ENCODE measurements at regions of chr13 and their contacts with region 1.

Region 1: DNA sequence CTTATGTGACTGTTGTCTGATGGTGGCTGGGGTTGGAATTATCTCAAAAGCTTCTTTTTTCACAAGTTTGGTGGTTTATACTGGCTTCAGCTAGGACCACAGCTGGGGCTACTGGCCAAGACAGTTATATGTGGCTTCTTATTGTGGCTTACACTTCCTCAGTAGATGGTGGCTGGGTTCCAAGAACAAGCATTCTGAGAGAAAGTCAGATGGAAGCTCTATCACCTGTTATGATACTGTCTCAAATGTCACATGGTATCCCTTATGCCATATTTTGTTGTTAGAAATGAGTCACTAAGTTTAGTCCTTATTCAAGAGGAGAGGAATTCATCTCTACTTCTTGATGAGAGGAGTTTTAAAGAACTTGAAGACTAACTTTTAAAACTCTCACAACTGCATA is 41.6 kb downstream of the NDFIP2 start:
- DNase-seq: peak; percentile 54
- H3K4me3 Mint-ChIP-seq: peak overlapping the region; percentile 43
- H3K27ac Mint-ChIP-seq: peak overlapping the region; percentile 86
- H3K4me1 Mint-ChIP-seq: peaks cover 43% of the 10 kb centered on the region
- H3K27me3 Mint-ChIP-seq: no peaks in the 10 kb centered on the region

Region 2: GRCh38 chr13:77907666-77908341 is 1614.8 kb before region 1 on chr13:
- intact Hi-C with region 1: no loop called
- DNase-seq: no peak
- H3K4me3 Mint-ChIP-seq: no peak overlapping the region
- H3K27ac Mint-ChIP-seq: no peak overlapping the region
- H3K4me1 Mint-ChIP-seq: no peaks in the 10 kb centered on the region
- H3K27me3 Mint-ChIP-seq: peaks cover 2% of the 10 kb centered on the region

Region 3: GRCh38 chr13:78658635-78659449 is 863.7 kb before region 1 on chr13 and contains the start of gene OBI1:
- intact Hi-C with region 1: loop called (anchors 10 kb)
- DNase-seq: peak; percentile 84
- H3K4me3 Mint-ChIP-seq: peak within 1 kb of the TSS; percentile 96
- H3K27ac Mint-ChIP-seq: peak within 1 kb of the TSS; percentile 97
- H3K4me1 Mint-ChIP-seq: peaks cover 36% of the 10 kb centered on the region
- H3K27me3 Mint-ChIP-seq: no peaks in the 10 kb centered on the region
- total RNA-seq, gene OBI1: 20.0 and 21.1 TPM in 2 replicates

Region 4: DNA sequence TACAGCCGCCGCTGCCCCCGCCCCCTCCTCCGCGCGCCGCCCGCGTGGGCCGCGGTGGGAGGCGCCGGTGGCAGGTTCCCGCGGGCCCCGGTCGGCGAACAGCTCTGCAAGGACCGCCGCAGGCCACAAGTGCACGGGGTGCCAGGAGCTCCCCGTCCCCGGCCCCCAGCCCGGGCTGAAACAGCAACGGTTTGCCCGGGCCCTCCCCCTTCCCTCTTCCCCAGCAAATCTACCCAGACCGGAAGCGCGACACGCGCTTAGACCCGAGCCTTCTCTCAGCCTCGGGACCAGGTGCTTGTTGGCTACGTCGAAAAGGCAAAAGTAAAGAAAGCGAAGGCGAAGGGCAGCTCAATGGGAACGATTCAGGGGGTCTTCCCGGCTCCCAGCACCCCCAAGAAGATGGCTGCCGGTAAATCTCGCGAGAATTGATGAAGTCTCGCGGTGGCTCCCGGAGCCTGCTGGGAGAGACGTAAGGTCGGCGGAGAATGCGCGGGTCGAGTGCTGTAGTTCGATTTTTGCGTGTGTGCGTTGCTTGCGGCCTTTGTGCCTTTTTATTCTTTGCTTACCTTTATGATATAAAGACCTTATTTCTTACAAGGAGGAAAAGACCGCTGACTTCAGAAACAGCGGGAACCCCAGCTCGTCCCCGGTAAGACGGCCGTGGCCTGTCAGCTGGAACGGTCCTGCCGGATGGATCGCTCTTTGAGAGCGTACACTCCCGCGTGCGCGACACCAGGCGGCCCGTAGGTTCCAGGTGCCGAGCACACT is 116.6 kb before region 1 on chr13 and contains the start of gene RBM26:
- intact Hi-C with region 1: loop called (anchors 1 kb)
- DNase-seq: peak; percentile 90
- H3K4me3 Mint-ChIP-seq: peak within 1 kb of the TSS; percentile 92
- H3K27ac Mint-ChIP-seq: peak within 1 kb of the TSS; percentile 97
- H3K4me1 Mint-ChIP-seq: peaks cover 24% of the 10 kb centered on the region
- H3K27me3 Mint-ChIP-seq: no peaks in the 10 kb centered on the region
- total RNA-seq, gene RBM26: 99.3 and 107 TPM in 2 replicates

Region 5: GRCh38 chr13:79486433-79487188 is 36.0 kb before region 1 on chr13:
- intact Hi-C with region 1: loop called (anchors 1 kb)
- DNase-seq: no peak
- H3K4me3 Mint-ChIP-seq: peak overlapping the region; percentile 37
- H3K27ac Mint-ChIP-seq: peak overlapping the region; percentile 90
- H3K4me1 Mint-ChIP-seq: peaks cover 86% of the 10 kb centered on the region
- H3K27me3 Mint-ChIP-seq: no peaks in the 10 kb centered on the region

Region 6: DNA sequence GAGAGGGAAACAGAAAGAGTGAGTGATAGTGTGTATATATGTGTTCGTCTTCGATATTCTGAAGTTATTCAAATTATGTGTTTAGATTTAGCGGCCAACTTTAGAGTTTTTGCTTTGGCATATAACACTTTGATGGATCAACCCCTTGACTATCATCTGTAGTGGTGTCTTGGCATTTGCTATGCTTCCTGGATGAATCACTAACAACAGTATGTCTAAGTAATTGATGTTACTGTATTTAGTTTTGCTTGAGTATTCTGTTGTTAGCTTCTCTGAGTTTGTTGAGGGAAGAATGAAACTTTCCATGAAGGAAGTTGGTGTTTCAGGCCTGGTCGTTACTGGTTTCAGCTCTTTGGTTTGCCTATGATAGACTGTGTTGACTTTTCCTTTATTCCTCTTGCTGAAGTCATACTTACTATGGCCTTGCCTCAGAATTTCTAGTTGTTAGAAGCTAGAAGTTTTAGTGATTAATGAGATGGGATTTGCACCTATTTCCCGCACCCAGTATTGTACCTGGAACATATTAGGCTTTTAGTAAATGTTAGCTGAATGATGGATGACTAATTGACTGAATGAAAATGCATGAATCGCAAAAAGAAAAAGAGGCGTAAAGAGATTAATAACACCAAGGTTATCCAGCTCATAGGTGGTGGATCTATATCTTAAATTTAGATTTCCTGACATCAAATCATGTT is 20.9 kb before region 1 on chr13:
- intact Hi-C with region 1: loop called (anchors 1 kb)
- DNase-seq: no peak
- H3K4me3 Mint-ChIP-seq: peak overlapping the region; percentile 38
- H3K27ac Mint-ChIP-seq: peak overlapping the region; percentile 93
- H3K4me1 Mint-ChIP-seq: peaks cover 92% of the 10 kb centered on the region
- H3K27me3 Mint-ChIP-seq: no peaks in the 10 kb centered on the region

Region 7: GRCh38 chr13:79541426-79542049 is 19.0 kb after region 1 on chr13:
- intact Hi-C with region 1: loop called (anchors 1 kb)
- DNase-seq: no peak
- H3K4me3 Mint-ChIP-seq: no peak overlapping the region
- H3K27ac Mint-ChIP-seq: no peak overlapping the region
- H3K4me1 Mint-ChIP-seq: peaks cover 34% of the 10 kb centered on the region
- H3K27me3 Mint-ChIP-seq: no peaks in the 10 kb centered on the region

Region 8: GRCh38 chr13:80132741-80133601 is 610.4 kb after region 1 on chr13:
- intact Hi-C with region 1: no loop called
- DNase-seq: no peak
- H3K4me3 Mint-ChIP-seq: no peak overlapping the region
- H3K27ac Mint-ChIP-seq: no peak overlapping the region
- H3K4me1 Mint-ChIP-seq: no peaks in the 10 kb centered on the region
- H3K27me3 Mint-ChIP-seq: no peaks in the 10 kb centered on the region

Measured in activated T-helper 1 cell treated with anti-CD3 and anti-CD28 coated beads, Interleukin-12 subunit alpha, Interleukin-12 subunit beta, Interleukin-2, Interleukin-4 antibody, amounts not matched to agents 30 ng/mL and 10 ng/mL and 1 ng/mL, durations not matched to agents 14 hours and 24 hours and 36 hours (primary cell).